Left cardiac atrium (tissue), 4 donors: ENCODE measurements at regions of chr7 and their contacts with region 1.

Region 1: DNA sequence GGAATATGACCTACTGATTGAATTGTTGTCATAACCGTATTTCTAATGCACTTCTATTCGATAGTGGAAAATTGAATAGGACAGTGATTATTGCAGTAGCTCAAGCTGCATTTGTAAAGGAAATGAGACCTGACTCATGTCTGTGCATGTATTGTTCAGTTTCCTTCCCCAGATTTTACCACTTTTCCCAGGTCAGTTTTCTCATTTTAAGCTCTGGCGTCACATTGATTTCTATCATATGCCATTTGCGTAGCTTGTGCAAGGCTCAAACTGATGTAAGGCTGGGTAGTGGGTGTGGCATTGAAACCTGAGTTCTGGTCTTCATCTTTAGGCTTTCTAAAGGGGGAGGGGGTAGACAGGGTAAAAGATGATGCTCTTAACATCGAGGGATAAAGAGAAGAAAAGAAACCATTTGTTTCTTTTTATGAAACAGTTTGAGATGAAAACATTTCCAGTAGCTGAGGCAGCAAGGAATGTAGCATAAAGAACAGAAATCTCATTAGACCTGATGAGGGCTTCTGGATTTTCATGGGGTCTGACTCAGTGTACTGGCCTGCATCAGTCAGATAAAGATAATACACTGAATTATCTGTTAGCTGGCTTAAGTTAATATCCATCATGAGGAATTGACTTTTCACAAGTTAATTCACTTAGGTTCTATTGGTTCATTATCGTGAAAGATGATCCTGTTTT is 182.3 kb upstream of the CDCA7L start:
- DNase-seq: no peak
- ATAC-seq: no peak

Region 2: DNA sequence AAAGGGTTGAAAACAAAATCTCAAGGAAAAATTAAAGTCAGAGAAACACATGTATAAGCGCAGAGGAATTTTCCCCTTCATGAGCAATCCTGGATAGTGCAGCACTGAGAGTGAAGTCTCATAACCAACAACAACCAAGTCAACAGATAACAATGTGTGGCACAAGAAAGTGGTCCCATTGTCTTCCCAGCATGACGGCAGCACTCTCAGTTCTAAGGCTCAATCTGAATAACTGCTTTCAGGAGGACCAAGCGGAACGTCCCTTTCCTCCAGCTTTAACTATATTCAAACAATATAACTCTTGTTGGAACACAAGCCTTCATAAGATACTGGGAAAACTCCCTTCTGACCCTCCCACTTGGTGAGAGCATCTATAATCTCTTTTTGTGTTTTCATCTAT is 91.1 kb after region 1 on chr7:
- intact Hi-C with region 1: loop called in 1 of 2 experiments (anchors 5 kb)
- DNase-seq: no peak
- ATAC-seq: peak; percentile 25 to 67

Region 3: DNA sequence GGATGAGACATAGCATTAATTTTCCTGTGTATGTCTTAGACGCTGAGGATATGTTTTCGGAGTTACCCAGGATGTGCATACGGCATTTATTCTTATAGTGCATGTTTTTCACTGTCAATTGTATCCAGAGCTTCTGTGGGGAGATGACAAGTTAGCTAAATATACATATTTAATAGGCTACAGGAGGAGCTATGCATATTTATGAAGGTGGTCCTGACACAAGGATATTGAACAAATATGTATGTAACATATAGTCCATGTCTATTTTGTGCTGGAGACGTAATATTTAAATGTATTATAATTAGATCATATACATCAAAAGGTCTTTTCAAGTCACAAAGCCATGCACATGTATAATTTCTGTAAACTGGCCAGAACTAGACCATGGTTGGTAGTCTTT is 615.0 kb after region 1 on chr7:
- intact Hi-C with region 1: no loop called
- DNase-seq: no peak
- ATAC-seq: no peak